Activated CD8-positive, alpha-beta memory T cell treated with anti-CD3 and anti-CD28 coated beads, Interleukin-2, amount 10 ng/mL, durations not matched to agents 7 days and 5 days (primary cell): ENCODE measurements at regions of chr11 and their contacts with region 1.

Region 1: DNA sequence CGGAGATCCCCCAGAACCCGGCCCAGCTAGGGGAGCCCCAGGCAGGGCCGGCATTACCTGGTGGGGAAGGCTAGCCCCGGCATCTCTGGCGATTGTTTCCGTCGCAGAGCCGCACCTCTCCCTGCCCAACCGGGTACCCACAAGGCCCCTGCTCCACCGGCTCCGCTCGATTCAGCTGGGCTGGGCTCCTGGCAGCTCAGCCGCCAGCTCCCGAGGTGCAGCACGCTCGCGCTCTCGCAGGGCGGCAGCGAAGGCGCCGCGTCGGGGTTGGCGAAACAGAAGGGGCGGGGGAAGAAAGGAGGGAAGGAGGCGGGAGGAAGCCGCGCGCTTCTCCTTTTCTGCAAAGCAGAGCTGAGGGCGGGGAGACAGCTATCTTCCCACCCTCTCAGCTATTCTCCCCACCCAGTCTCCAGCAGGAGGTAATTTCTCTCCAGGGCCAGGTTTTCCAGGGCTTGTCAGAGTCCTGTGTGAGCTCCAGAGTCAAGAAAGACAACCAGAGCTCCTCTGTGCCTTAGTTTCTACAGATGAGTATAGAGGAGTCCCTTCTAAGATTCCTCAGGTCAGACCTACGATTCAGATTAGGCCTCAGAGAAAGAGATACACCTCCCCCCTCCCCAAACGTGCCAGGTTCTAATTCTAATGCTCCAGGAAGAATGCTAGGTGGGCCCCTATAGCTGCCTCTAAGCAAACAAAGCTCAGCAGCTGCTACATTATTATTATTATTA is 62.0 kb downstream of the PAK1 start:
- DNase-seq: peak; percentile 88
- ATAC-seq: peak; percentile 97
- H3K4me3 Mint-ChIP-seq: peak overlapping the region; percentile 91
- H3K27ac Mint-ChIP-seq: peak overlapping the region; percentile 87
- H3K4me1 Mint-ChIP-seq: peaks cover 39% of the 10 kb centered on the region
- H3K27me3 Mint-ChIP-seq: no peaks in the 10 kb centered on the region

Region 2: GRCh38 chr11:77346906-77347603 is 64.8 kb before region 1 on chr11:
- CTCF ChIA-PET with region 1: no interaction called
- DNase-seq: no peak
- ATAC-seq: no peak
- H3K4me3 Mint-ChIP-seq: no peak overlapping the region
- H3K27ac Mint-ChIP-seq: no peak overlapping the region
- H3K4me1 Mint-ChIP-seq: no peaks in the 10 kb centered on the region
- H3K27me3 Mint-ChIP-seq: no peaks in the 10 kb centered on the region

Region 3: GRCh38 chr11:77435972-77436371 is 24.1 kb after region 1 on chr11:
- CTCF ChIA-PET with region 1: interaction called, 11 read pairs
- DNase-seq: no peak
- ATAC-seq: no peak
- H3K4me3 Mint-ChIP-seq: no peak overlapping the region
- H3K27ac Mint-ChIP-seq: no peak overlapping the region
- H3K4me1 Mint-ChIP-seq: peaks cover 16% of the 10 kb centered on the region
- H3K27me3 Mint-ChIP-seq: peaks cover 17% of the 10 kb centered on the region

Region 4: DNA sequence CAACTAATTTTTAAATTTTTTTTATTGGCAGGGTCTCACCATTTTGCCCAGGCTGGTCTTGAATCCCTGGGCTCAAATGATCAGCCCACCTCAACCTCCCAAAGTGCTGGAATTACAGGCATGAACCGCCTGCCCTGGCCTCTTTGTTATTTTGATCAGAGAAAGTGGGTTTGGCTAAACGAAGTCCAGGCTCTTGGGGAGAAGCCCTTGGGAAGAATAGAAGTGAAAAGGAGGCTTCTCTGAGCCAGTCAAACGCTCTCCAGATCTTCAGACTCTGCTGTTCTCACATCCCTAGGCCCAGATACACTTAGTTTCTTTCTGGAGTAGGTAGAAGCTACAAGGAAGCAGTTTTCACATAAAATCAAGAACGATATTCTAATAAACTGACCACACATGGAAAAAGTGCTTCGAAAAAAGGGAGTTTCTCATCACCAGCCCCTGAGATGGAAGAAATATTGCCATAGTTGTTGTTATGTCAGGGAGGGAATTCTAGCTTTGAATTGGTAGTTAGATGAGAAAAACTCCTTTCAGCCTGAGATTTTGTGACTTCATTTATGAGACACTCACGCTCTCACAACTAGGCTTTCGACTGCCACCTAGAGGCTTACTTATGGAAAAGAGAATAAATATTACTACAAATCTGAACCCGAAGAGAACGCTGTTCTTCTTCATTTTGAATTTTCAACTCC is 136.1 kb after region 1 on chr11:
- CTCF ChIA-PET with region 1: interaction called, 10 read pairs
- DNase-seq: no peak
- ATAC-seq: no peak
- H3K4me3 Mint-ChIP-seq: no peak overlapping the region
- H3K27ac Mint-ChIP-seq: no peak overlapping the region
- H3K4me1 Mint-ChIP-seq: no peaks in the 10 kb centered on the region
- H3K27me3 Mint-ChIP-seq: no peaks in the 10 kb centered on the region

Region 5: DNA sequence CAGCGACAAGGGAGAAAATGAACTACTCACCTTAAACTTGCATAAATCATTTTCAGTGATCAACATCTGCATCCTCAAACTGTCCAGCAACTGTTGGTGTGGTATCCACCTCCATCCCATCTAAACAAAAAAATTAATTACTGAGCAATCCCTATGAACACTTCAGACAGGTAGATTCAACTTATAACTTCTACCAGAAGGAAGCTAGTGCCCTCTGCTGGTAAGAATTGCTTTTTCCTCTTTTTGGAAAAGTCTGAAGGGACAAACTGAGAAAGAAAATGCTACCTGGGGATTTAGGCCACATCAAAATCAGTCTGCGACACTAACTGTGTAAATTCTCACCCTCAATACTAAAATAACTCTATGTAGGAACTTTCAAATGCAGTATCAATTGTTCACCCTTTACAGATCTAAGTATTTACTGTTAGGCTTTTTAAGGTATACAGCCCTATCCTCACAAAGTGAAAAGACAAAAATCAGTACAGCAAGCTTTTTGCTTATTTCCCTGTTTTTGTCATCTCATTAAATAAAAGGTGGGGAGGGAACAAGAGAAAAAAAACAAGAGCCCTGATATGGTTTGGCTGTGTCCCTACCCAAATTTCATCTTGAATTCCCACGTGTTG is 207.8 kb after region 1 on chr11:
- CTCF ChIA-PET with region 1: interaction called, 10 read pairs
- DNase-seq: no peak
- ATAC-seq: peak; percentile 45
- H3K4me3 Mint-ChIP-seq: no peak overlapping the region
- H3K27ac Mint-ChIP-seq: no peak overlapping the region
- H3K4me1 Mint-ChIP-seq: no peaks in the 10 kb centered on the region
- H3K27me3 Mint-ChIP-seq: no peaks in the 10 kb centered on the region